PC-3 (cell line): ENCODE measurements at regions of chr7 and their contacts with region 1.

Region 1: GRCh38 chr7:21427182-21427870 is 557 bp upstream of the SP4 start:
- DNase-seq: peak; percentile 96
- ATAC-seq: peak; percentile 75
- H3K4me3 ChIP-seq: peak overlapping the region; percentile 74
- H3K27ac ChIP-seq: peak overlapping the region; percentile 82
- H3K4me1 ChIP-seq: peaks cover 10% of the 10 kb centered on the region
- H3K27me3 ChIP-seq: no peaks in the 10 kb centered on the region
- CTCF ChIP-seq: no peak

Region 2: GRCh38 chr7:20793694-20794394 is 633.5 kb before region 1 on chr7:
- CTCF ChIA-PET with region 1: no interaction called
- POLR2A ChIA-PET with region 1: no interaction called
- intact Hi-C with region 1: loop called (anchors 5 kb)
- DNase-seq: no peak
- ATAC-seq: no peak
- H3K4me3 ChIP-seq: no peak overlapping the region
- H3K27ac ChIP-seq: no peak overlapping the region
- H3K4me1 ChIP-seq: peaks cover 7% of the 10 kb centered on the region; the same call in 1 of the 2 replicates
- H3K27me3 ChIP-seq: peaks cover 91% of the 10 kb centered on the region
- CTCF ChIP-seq: no peak

Region 3: DNA sequence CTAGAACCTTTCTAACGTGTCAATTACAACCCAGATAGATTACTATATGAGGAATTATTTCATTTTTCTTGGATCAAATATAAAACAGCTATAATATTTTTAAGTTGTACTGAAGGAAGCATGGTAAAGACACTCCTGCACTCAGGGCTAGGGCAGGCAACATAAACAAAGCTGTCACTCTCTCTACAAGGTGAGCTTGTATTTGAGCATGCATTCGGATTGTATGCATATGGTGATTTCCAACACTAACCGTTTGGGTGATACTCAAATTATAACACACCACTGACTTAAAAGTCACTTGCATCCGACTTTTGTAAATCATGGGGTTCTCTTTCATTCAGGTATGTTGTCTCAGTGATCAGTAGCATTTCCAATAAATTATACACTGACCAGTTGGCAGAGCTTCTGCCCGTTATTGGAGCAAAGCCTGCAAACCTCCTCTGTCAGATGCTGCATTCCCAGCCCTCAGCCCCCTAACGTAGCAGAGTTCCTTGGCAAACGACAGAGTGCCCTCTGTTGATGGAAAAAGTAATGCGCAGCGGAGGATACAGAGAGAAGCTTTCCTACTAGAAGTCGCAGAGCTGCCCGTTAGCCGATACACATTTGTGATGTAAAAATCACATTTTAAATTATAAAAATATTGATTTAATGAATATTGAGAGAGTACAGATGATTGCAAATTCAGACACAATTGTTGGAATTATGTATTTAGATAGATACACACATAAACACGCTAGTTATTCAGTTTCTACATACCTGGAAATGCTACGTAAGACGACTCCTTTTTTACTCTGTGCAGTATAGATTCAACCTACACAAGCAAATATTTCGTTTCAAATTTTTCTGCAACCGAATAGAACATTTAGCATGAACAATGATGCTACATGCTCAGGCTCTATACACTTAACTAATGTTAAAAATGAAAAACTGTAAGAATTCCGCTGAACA is 173.3 kb before region 1 on chr7:
- CTCF ChIA-PET with region 1: no interaction called
- POLR2A ChIA-PET with region 1: no interaction called
- intact Hi-C with region 1: loop called (anchors 2 kb)
- DNase-seq: peak; percentile 79
- ATAC-seq: peak; percentile 84
- H3K4me3 ChIP-seq: no peak overlapping the region
- H3K27ac ChIP-seq: no peak overlapping the region
- H3K4me1 ChIP-seq: no peaks in the 10 kb centered on the region
- H3K27me3 ChIP-seq: peaks cover 66% of the 10 kb centered on the region
- CTCF ChIP-seq: peak; percentile 79

Region 4: GRCh38 chr7:21507626-21508343 is 80.5 kb after region 1 on chr7:
- CTCF ChIA-PET with region 1: no interaction called
- POLR2A ChIA-PET with region 1: no interaction called
- intact Hi-C with region 1: loop called (anchors 1 kb)
- DNase-seq: peak; percentile 74
- ATAC-seq: peak; percentile 93
- H3K4me3 ChIP-seq: no peak overlapping the region
- H3K27ac ChIP-seq: no peak overlapping the region
- H3K4me1 ChIP-seq: peaks cover 5% of the 10 kb centered on the region; the same call in 1 of the 2 replicates
- H3K27me3 ChIP-seq: no peaks in the 10 kb centered on the region
- CTCF ChIP-seq: peak; percentile 86

Region 5: GRCh38 chr7:21945454-21946227 is 518.3 kb after region 1 on chr7 and contains the start of gene CDCA7L:
- CTCF ChIA-PET with region 1: no interaction called
- POLR2A ChIA-PET with region 1: no interaction called
- intact Hi-C with region 1: loop called (anchors 5 kb)
- DNase-seq: peak; percentile 75
- ATAC-seq: peak; percentile 75
- H3K4me3 ChIP-seq: peak within 1 kb of the TSS; percentile 97
- H3K27ac ChIP-seq: peak within 1 kb of the TSS; percentile 76
- H3K4me1 ChIP-seq: peaks cover 43% of the 10 kb centered on the region
- H3K27me3 ChIP-seq: no peaks in the 10 kb centered on the region
- CTCF ChIP-seq: no peak
- total RNA-seq, gene CDCA7L: 59.9 and 78.4 TPM in 2 replicates